ENCODE measurements at regions of chr11 and their contacts with region 1.

Region 1: GRCh38 chr11:250740-251299 is 14.0 kb downstream of the PSMD13 start:
- DNase-seq: peak; percentile 72 to 87 (median 83)
- ATAC-seq: peak; percentile 99
- H3K4me3 ChIP-seq: no peak overlapping the region
- H3K4me3 Mint-ChIP-seq: peak overlapping the region in 1 of 10 donors; percentile 20
- H3K27ac ChIP-seq: peak overlapping the region; percentile 32
- H3K27ac Mint-ChIP-seq: peak overlapping the region; percentile 59 to 91 (median 66)
- H3K4me1 ChIP-seq: peaks cover 0 to 3% of the 10 kb centered on the region in 2 donors
- H3K4me1 Mint-ChIP-seq: peaks cover 9 to 18% (median 13%) of the 10 kb centered on the region in 7 donors
- H3K27me3 ChIP-seq: no peaks in the 10 kb centered on the region
- H3K27me3 Mint-ChIP-seq: peaks cover 0 to 3% (median 0%) of the 10 kb centered on the region in 5 donors

Region 2: GRCh38 chr11:236774-237767 is 13.7 kb before region 1 on chr11 and contains the start of gene PSMD13:
- CTCF ChIA-PET with region 1: interaction called, 21 read pairs
- POLR2A ChIA-PET with region 1: interaction called, 23 read pairs
- intact Hi-C with region 1: loop called in 1 of 2 experiments (anchors 1 kb)
- DNase-seq: peak; percentile 82 to 92 (median 88)
- ATAC-seq: peak; percentile 88
- H3K4me3 ChIP-seq: peak within 1 kb of the TSS; percentile 100
- H3K4me3 Mint-ChIP-seq: peak within 1 kb of the TSS; percentile 84 to 99 (median 96)
- H3K27ac ChIP-seq: peak within 1 kb of the TSS; percentile 97
- H3K27ac Mint-ChIP-seq: peak within 1 kb of the TSS; percentile 84 to 100 (median 100)
- H3K4me1 ChIP-seq: peaks cover 17 to 23% of the 10 kb centered on the region in 2 donors
- H3K4me1 Mint-ChIP-seq: peaks cover 26 to 66% (median 53%) of the 10 kb centered on the region in 7 donors
- H3K27me3 ChIP-seq: no peaks in the 10 kb centered on the region
- H3K27me3 Mint-ChIP-seq: no peaks in the 10 kb centered on the region
- total RNA-seq, gene PSMD13: 64.3 to 172 (median 86.9) TPM

Region 3: GRCh38 chr11:279966-280582 is 29.3 kb after region 1 on chr11:
- CTCF ChIA-PET with region 1: interaction called, 17 read pairs
- POLR2A ChIA-PET with region 1: interaction called, 38 read pairs
- intact Hi-C with region 1: loop called (anchors 1 to 5 kb)
- DNase-seq: peak in 6 of 9 donors; percentile 40 to 59 (median 54)
- ATAC-seq: peak; percentile 70
- H3K4me3 ChIP-seq: peak overlapping the region; percentile 52
- H3K4me3 Mint-ChIP-seq: peak overlapping the region; percentile 80 to 93 (median 89)
- H3K27ac ChIP-seq: peak overlapping the region; percentile 61
- H3K27ac Mint-ChIP-seq: peak overlapping the region in 6 of 9 donors; percentile 75 to 90 (median 82)
- H3K4me1 ChIP-seq: peaks cover 22% of the 10 kb centered on the region in 2 donors
- H3K4me1 Mint-ChIP-seq: peaks cover 37 to 67% (median 52%) of the 10 kb centered on the region in 7 donors
- H3K27me3 ChIP-seq: no peaks in the 10 kb centered on the region
- H3K27me3 Mint-ChIP-seq: peaks cover 0 to 53% (median 0%) of the 10 kb centered on the region in 5 donors

Region 4: GRCh38 chr11:293847-294661 is 43.2 kb after region 1 on chr11:
- CTCF ChIA-PET with region 1: interaction called, 12 read pairs
- POLR2A ChIA-PET with region 1: interaction called, 5 read pairs
- intact Hi-C with region 1: loop called in 1 of 2 experiments (anchors 5 kb)
- DNase-seq: no peak
- ATAC-seq: no peak
- H3K4me3 ChIP-seq: no peak overlapping the region
- H3K4me3 Mint-ChIP-seq: no peak overlapping the region
- H3K27ac ChIP-seq: no peak overlapping the region
- H3K27ac Mint-ChIP-seq: peak overlapping the region in 2 of 9 donors; percentile 19 to 46
- H3K4me1 ChIP-seq: peaks cover 28 to 34% of the 10 kb centered on the region in 2 donors
- H3K4me1 Mint-ChIP-seq: peaks cover 16 to 41% (median 25%) of the 10 kb centered on the region in 7 donors
- H3K27me3 ChIP-seq: no peaks in the 10 kb centered on the region
- H3K27me3 Mint-ChIP-seq: no peaks in the 10 kb centered on the region

Region 5: DNA sequence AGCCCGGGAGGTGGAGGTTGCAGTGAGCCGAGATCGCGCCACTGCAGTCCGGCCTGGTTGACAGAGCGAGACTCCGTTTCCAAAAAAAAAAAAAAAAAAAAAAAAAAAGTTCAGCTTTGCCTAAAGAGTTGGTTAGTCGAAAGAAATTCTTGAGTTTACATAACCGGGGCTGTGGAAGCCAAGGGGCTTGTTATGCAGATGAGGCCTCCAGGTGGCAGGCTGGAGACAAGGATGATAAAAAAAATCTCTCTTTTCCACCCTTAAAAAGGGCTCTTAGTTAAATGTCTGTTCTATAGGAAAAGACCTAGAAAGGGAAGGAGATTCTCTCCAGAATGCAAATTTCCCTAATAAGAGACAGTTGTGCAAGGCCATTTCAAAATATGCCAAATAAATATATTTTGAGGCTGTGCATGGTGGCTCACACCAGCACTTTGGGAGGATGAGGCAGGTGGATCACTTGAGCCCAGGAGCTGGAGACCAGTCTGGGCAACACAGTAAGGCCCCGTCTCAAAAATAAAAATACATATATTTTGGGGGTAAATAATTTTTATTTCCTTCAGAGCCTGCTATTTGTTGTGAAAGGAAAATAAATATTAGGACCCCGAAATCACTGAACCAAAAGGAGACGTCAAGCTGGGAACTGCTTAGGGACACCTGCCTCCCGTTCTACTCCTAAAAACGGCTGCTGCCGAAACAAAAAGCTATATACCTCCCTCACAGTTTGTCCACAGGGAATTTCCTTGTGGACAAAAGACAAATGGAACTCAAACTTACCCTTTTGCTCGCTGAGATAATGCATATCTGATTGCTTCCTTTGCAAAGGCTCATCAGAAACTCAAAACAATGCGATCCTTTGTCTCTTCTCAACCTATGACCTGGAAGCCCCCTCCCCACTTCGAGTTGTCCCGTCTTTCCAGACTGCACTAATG is 54.4 kb after region 1 on chr11:
- CTCF ChIA-PET with region 1: interaction called, 49 read pairs
- POLR2A ChIA-PET with region 1: interaction called, 5 read pairs
- intact Hi-C with region 1: loop called in 1 of 2 experiments (anchors 1 kb)
- DNase-seq: peak in 6 of 9 donors; percentile 62 to 76 (median 70)
- ATAC-seq: peak; percentile 44
- H3K4me3 ChIP-seq: no peak overlapping the region
- H3K4me3 Mint-ChIP-seq: peak overlapping the region in 7 of 10 donors; percentile 0 to 55 (median 47)
- H3K27ac ChIP-seq: peak overlapping the region; percentile 95
- H3K27ac Mint-ChIP-seq: peak overlapping the region; percentile 14 to 97 (median 84)
- H3K4me1 ChIP-seq: peaks cover 21 to 24% of the 10 kb centered on the region in 2 donors
- H3K4me1 Mint-ChIP-seq: peaks cover 29 to 61% (median 48%) of the 10 kb centered on the region in 7 donors
- H3K27me3 ChIP-seq: no peaks in the 10 kb centered on the region
- H3K27me3 Mint-ChIP-seq: peaks cover 0 to 9% (median 0%) of the 10 kb centered on the region in 5 donors

Region 6: GRCh38 chr11:355581-356458 is 105.0 kb after region 1 on chr11:
- CTCF ChIA-PET with region 1: interaction called, 11 read pairs
- POLR2A ChIA-PET with region 1: interaction called, 7 read pairs
- intact Hi-C with region 1: loop called (anchors 1 to 5 kb)
- DNase-seq: peak; percentile 74 to 92 (median 90)
- ATAC-seq: peak; percentile 89
- H3K4me3 ChIP-seq: peak overlapping the region; percentile 66
- H3K4me3 Mint-ChIP-seq: peak overlapping the region in 8 of 10 donors; percentile 83 to 93 (median 88)
- H3K27ac ChIP-seq: peak overlapping the region; percentile 97
- H3K27ac Mint-ChIP-seq: peak overlapping the region in 6 of 9 donors; percentile 89 to 99 (median 98)
- H3K4me1 ChIP-seq: peaks cover 9 to 19% of the 10 kb centered on the region in 2 donors
- H3K4me1 Mint-ChIP-seq: peaks cover 29 to 45% (median 37%) of the 10 kb centered on the region in 7 donors
- H3K27me3 ChIP-seq: no peaks in the 10 kb centered on the region
- H3K27me3 Mint-ChIP-seq: peaks cover 0 to 6% (median 0%) of the 10 kb centered on the region in 5 donors

Region 7: GRCh38 chr11:385594-386351 is 135.0 kb after region 1 on chr11:
- CTCF ChIA-PET with region 1: no interaction called
- POLR2A ChIA-PET with region 1: no interaction called
- intact Hi-C with region 1: no loop called
- DNase-seq: no peak
- ATAC-seq: no peak
- H3K4me3 ChIP-seq: no peak overlapping the region
- H3K4me3 Mint-ChIP-seq: no peak overlapping the region
- H3K27ac ChIP-seq: no peak overlapping the region
- H3K27ac Mint-ChIP-seq: no peak overlapping the region
- H3K4me1 ChIP-seq: peaks cover 0 to 8% of the 10 kb centered on the region in 2 donors
- H3K4me1 Mint-ChIP-seq: peaks cover 0 to 8% (median 6%) of the 10 kb centered on the region in 7 donors
- H3K27me3 ChIP-seq: no peaks in the 10 kb centered on the region
- H3K27me3 Mint-ChIP-seq: peaks cover 0 to 17% (median 3%) of the 10 kb centered on the region in 5 donors

Region 8: GRCh38 chr11:396948-397548 is 146.2 kb after region 1 on chr11:
- CTCF ChIA-PET with region 1: interaction called, 5 read pairs
- POLR2A ChIA-PET with region 1: no interaction called
- intact Hi-C with region 1: loop called in 1 of 2 experiments (anchors 1 kb)
- DNase-seq: peak in 1 of 9 donors; percentile 46
- ATAC-seq: peak; percentile 77
- H3K4me3 ChIP-seq: no peak overlapping the region
- H3K4me3 Mint-ChIP-seq: peak overlapping the region in 4 of 10 donors; percentile 29 to 69 (median 46)
- H3K27ac ChIP-seq: no peak overlapping the region
- H3K27ac Mint-ChIP-seq: no peak overlapping the region
- H3K4me1 ChIP-seq: no peaks in the 10 kb centered on the region
- H3K4me1 Mint-ChIP-seq: peaks cover 0 to 11% (median 0%) of the 10 kb centered on the region in 7 donors
- H3K27me3 ChIP-seq: no peaks in the 10 kb centered on the region
- H3K27me3 Mint-ChIP-seq: peaks cover 0 to 9% (median 0%) of the 10 kb centered on the region in 5 donors

Region 9: GRCh38 chr11:568306-569157 is 317.7 kb after region 1 on chr11:
- CTCF ChIA-PET with region 1: no interaction called
- POLR2A ChIA-PET with region 1: no interaction called
- intact Hi-C with region 1: no loop called
- DNase-seq: peak; percentile 87 to 99 (median 95)
- ATAC-seq: peak; percentile 95
- H3K4me3 ChIP-seq: peak overlapping the region; percentile 73
- H3K4me3 Mint-ChIP-seq: peak overlapping the region; percentile 69 to 84 (median 77)
- H3K27ac ChIP-seq: peak overlapping the region; percentile 65
- H3K27ac Mint-ChIP-seq: peak overlapping the region in 3 of 9 donors; percentile 40 to 82 (median 68)
- H3K4me1 ChIP-seq: peaks cover 6 to 8% of the 10 kb centered on the region in 2 donors
- H3K4me1 Mint-ChIP-seq: peaks cover 0 to 16% (median 3%) of the 10 kb centered on the region in 7 donors
- H3K27me3 ChIP-seq: no peaks in the 10 kb centered on the region
- H3K27me3 Mint-ChIP-seq: no peaks in the 10 kb centered on the region